ENCODE measurements at regions of chr1 and their contacts with region 1.

Region 1: GRCh38 chr1:101178688-101179491 is 57.9 kb upstream of the S1PR1 start:
- DNase-seq: peak; percentile 60
- ATAC-seq: peak; percentile 86
- H3K4me3 Mint-ChIP-seq: peak overlapping the region; percentile 81
- H3K27ac Mint-ChIP-seq: peak overlapping the region; percentile 97
- H3K4me1 Mint-ChIP-seq: peaks cover 61% of the 10 kb centered on the region
- H3K27me3 Mint-ChIP-seq: no peaks in the 10 kb centered on the region

Region 2: DNA sequence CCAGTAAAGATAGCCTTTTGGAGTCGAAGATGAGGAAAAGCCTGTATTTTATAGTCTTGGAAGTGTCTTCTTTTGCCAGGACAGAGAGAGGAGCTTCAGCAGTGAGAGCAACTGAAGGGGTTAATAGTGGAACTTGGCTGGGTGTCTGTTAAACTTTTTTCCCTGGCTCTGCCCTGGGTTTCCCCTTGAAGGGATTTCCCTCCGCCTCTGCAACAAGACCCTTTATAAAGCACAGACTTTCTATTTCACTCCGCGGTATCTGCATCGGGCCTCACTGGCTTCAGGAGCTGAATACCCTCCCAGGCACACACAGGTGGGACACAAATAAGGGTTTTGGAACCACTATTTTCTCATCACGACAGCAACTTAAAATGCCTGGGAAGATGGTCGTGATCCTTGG is 459.4 kb before region 1 on chr1 and contains the start of gene VCAM1:
- CTCF ChIA-PET with region 1: no interaction called
- POLR2A ChIA-PET with region 1: no interaction called
- DNase-seq: no peak
- ATAC-seq: no peak
- H3K4me3 Mint-ChIP-seq: no peak within 1 kb of the TSS
- H3K27ac Mint-ChIP-seq: no peak within 1 kb of the TSS
- H3K4me1 Mint-ChIP-seq: peaks cover 5% of the 10 kb centered on the region
- H3K27me3 Mint-ChIP-seq: peaks cover 26% of the 10 kb centered on the region
- total RNA-seq, gene VCAM1: 0.08 to 0.11 TPM

Region 3: DNA sequence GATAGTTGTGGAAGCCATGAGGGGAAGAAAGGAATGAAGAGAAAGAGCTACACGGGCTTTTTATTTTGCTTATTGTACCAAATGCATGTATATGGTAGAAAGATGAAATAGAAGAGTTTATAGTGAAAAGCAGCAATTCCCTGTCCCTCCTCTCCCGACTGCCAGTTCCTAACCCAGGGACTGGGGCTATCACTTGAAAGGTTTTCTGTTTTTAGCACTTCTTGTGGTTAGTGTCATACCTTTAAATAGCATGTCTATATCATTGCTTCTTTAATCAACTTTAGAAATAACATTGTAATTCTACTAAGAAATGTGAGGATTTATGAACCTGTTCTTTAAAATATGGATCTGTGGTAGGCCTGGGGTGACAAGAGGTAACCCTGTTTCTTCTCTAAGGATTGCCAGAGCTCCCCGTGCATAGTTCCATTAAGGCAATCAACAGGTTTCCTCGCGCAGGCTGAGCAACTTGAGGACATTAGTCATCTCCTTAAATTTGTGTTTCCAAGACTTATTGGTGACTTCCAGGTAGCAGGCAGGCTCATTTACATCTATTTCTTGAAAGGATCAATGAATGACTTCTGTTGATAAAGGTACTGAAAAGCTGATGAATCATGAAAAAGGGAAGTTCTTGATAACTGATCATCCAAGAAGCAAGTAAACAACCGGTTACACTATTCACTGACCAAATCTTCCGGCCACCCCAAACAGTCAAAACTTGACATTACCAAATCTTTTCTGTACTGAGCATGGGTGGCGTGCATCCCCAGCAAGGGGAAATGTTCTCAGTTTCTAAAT is 20.1 kb after region 1 on chr1:
- CTCF ChIA-PET with region 1: interaction called, 5 read pairs
- POLR2A ChIA-PET with region 1: interaction called, 11 read pairs
- DNase-seq: peak; percentile 44
- ATAC-seq: no peak
- H3K4me3 Mint-ChIP-seq: no peak overlapping the region
- H3K27ac Mint-ChIP-seq: peak overlapping the region; percentile 41
- H3K4me1 Mint-ChIP-seq: peaks cover 12% of the 10 kb centered on the region
- H3K27me3 Mint-ChIP-seq: no peaks in the 10 kb centered on the region

Region 4: DNA sequence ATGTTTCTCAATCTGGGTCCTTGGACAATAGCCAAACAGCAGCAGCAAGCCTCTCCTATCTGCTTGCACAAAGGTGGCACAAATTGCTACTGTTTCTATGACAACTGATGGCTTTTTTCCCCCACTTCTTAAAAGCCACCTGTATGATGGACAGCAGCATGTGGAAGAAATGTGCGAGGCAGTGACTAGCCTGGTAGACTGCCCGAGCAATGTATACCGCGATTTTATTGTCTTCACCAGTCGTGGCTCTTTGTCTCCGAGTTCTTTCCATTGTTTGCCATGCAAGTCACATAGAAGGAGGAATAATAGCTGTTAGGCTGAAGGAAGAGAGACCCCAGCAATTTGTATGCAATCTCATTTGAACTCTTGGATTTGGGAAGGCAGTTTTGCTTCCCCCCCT is 137.4 kb after region 1 on chr1:
- CTCF ChIA-PET with region 1: no interaction called
- POLR2A ChIA-PET with region 1: no interaction called
- DNase-seq: no peak
- ATAC-seq: no peak
- H3K4me3 Mint-ChIP-seq: no peak overlapping the region
- H3K27ac Mint-ChIP-seq: no peak overlapping the region
- H3K4me1 Mint-ChIP-seq: peaks cover 33% of the 10 kb centered on the region
- H3K27me3 Mint-ChIP-seq: peaks cover 13% of the 10 kb centered on the region

Region 5: DNA sequence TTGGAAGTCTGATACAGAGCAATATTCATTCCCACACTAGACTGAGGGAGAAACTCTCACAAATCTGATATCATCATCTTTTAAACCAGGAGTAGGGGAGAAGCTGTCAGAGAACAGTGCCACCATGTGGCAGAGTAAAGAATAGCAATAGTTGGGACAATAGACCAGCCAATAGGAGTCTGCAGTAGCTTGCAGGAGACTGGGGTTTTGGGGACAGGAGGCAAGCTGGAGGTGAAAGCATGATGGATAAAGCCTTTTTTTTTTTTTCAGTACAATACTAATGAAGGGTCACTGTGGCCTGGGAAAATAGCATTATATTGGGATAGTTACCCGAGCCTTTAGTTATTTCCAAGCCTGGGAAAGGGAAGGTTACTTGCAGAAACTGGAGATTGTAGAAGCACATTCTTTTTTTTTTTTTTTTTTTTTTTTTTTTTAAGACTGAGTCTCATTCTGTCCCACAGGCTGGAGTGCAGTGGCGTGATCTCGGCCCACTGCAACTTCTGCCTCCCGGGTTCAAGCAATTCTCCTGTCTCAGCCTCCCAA is 178.6 kb after region 1 on chr1:
- CTCF ChIA-PET with region 1: no interaction called
- POLR2A ChIA-PET with region 1: no interaction called
- DNase-seq: peak; percentile 85
- ATAC-seq: peak; percentile 100
- H3K4me3 Mint-ChIP-seq: no peak overlapping the region
- H3K27ac Mint-ChIP-seq: peak overlapping the region; percentile 60
- H3K4me1 Mint-ChIP-seq: peaks cover 8% of the 10 kb centered on the region
- H3K27me3 Mint-ChIP-seq: peaks cover 5% of the 10 kb centered on the region